ENCODE measurements at regions of chr3 and their contacts with region 1.

Region 1: DNA sequence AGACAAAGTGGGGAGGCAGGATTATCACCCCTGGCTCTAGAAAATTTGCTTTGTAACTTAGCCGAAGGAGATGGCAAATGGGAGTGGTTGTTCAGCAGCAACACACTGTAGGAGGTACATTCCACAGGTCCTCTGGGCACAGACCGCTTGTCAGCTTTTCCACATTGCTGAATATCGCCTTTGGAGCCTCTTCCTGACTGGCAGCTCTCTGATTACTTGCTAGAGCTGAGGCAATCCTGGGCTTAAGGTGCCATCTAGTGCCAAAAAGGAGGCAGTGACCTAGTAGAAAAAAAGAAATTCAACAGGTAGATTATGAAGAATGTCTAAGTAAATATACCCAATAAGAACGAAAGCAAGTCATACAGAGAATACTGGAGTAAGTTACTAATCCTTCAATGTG is 13.1 kb upstream of the SCN5A start:
- DNase-seq: no peak
- H3K4me3 ChIP-seq: no peak overlapping the region
- H3K27ac ChIP-seq: no peak overlapping the region
- H3K4me1 ChIP-seq: peaks cover 0 to 8% (median 4%) of the 10 kb centered on the region in 4 experiments; a peak in 5 of 7 replicates
- H3K27me3 ChIP-seq: no peaks in the 10 kb centered on the region
- CTCF ChIP-seq: peak; percentile 4 to 83 (median 83)
- EP300 ChIP-seq: no peak
- POLR2A ChIP-seq: no peak
- RAD21 ChIP-seq: peak; percentile 97 to 98

Region 2: GRCh38 chr3:38496131-38496910 is 166.2 kb before region 1 on chr3 and contains the start of gene EXOG:
- CTCF ChIA-PET with region 1: interaction called, 14 read pairs
- POLR2A ChIA-PET with region 1: interaction called, 3 read pairs
- DNase-seq: peak; percentile 82 to 98
- H3K4me3 ChIP-seq: peak within 1 kb of the TSS; percentile 51 to 85 (median 69)
- H3K27ac ChIP-seq: peak within 1 kb of the TSS; percentile 88
- H3K4me1 ChIP-seq: peaks cover 0 to 2% (median 0%) of the 10 kb centered on the region in 4 experiments; a peak in 1 of 7 replicates
- H3K27me3 ChIP-seq: no peaks in the 10 kb centered on the region
- CTCF ChIP-seq: peak; percentile 75 to 96 (median 84)
- EP300 ChIP-seq: 0 out of 3 replicates have a peak, but pooled peaks of 1 of the 2 experiments have one; percentile 31
- POLR2A ChIP-seq: peak; percentile 72 to 88
- RAD21 ChIP-seq: peak; percentile 56 to 77; a peak in 3 of 4 replicates
- total RNA-seq, gene EXOG: 12.2 and 12.9 TPM in 2 replicates

Region 3: GRCh38 chr3:38551026-38551832 is 111.3 kb before region 1 on chr3:
- CTCF ChIA-PET with region 1: no interaction called
- POLR2A ChIA-PET with region 1: no interaction called
- DNase-seq: no peak
- H3K4me3 ChIP-seq: no peak overlapping the region
- H3K27ac ChIP-seq: no peak overlapping the region
- H3K4me1 ChIP-seq: peaks cover 0 to 5% (median 1%) of the 10 kb centered on the region in 4 experiments; a peak in 1 of 7 replicates
- H3K27me3 ChIP-seq: no peaks in the 10 kb centered on the region
- CTCF ChIP-seq: no peak
- EP300 ChIP-seq: no peak
- POLR2A ChIP-seq: no peak
- RAD21 ChIP-seq: no peak

Region 4: DNA sequence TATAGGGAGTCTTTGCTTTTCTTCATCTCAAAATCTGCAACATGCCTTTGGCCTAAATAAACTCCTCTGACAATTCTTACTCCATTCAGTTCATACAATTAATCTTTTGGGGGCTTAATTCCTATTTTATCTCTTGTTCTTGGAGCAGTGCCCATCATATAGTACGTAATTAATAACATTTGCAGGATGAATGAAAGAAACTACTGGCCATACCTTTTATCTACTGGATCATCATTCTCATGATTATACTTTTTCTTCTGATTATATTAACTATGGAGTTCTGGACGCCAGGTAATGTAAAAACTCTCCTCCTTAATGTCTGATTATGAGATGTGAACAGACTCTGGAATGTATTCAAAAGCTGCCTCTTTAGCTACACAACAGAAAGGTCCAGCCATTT is 33.5 kb after region 1 on chr3:
- CTCF ChIA-PET with region 1: no interaction called
- POLR2A ChIA-PET with region 1: no interaction called
- DNase-seq: no peak
- H3K4me3 ChIP-seq: no peak overlapping the region
- H3K27ac ChIP-seq: no peak overlapping the region
- H3K4me1 ChIP-seq: no peaks in the 10 kb centered on the region
- H3K27me3 ChIP-seq: no peaks in the 10 kb centered on the region
- CTCF ChIP-seq: no peak
- EP300 ChIP-seq: no peak
- POLR2A ChIP-seq: no peak
- RAD21 ChIP-seq: no peak